ENCODE measurements at regions of chr9 and their contacts with region 1.

Region 1: GRCh38 chr9:36166101-36166927 is 2.9 kb upstream of the CCIN start:
- DNase-seq: peak; percentile 76
- H3K4me3 ChIP-seq: peak overlapping the region; percentile 69
- H3K27ac ChIP-seq: no peak overlapping the region
- H3K4me1 ChIP-seq: peaks cover 3% of the 10 kb centered on the region
- CTCF ChIP-seq: peak; percentile 93

Region 2: DNA sequence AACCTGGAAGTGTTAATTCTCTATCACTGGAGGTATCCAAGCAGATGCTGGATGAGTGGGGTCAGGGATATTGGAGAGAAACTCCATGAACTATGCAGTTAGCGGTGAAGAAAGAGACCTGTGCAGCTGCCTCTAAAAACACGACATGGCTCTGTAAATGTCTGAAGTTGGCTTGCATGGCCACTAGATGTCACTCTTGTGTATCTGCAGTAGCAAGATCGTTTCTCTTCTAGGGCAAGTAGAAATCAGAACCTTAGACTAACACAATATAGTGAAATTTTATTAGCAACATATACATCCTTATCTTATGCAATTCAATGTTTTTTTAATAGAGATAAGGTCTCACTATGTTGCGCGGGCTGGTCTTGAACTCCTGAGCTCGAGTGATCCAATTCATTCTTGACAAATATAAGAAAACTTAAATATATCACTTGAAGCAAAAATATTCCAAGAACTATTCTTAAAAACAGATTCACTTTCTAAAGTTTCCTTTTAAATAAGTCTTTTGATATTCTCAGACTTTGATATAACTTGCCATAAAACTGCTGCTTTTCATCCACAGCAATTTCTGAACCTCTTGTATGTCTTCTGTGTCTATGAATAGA is 211.3 kb before region 1 on chr9:
- CTCF ChIA-PET with region 1: no interaction called
- POLR2A ChIA-PET with region 1: no interaction called
- intact Hi-C with region 1: loop called (anchors 2 kb)
- DNase-seq: peak; percentile 78
- H3K4me3 ChIP-seq: no peak overlapping the region
- H3K27ac ChIP-seq: no peak overlapping the region
- H3K4me1 ChIP-seq: no peaks in the 10 kb centered on the region
- CTCF ChIP-seq: peak; percentile 96

Region 3: DNA sequence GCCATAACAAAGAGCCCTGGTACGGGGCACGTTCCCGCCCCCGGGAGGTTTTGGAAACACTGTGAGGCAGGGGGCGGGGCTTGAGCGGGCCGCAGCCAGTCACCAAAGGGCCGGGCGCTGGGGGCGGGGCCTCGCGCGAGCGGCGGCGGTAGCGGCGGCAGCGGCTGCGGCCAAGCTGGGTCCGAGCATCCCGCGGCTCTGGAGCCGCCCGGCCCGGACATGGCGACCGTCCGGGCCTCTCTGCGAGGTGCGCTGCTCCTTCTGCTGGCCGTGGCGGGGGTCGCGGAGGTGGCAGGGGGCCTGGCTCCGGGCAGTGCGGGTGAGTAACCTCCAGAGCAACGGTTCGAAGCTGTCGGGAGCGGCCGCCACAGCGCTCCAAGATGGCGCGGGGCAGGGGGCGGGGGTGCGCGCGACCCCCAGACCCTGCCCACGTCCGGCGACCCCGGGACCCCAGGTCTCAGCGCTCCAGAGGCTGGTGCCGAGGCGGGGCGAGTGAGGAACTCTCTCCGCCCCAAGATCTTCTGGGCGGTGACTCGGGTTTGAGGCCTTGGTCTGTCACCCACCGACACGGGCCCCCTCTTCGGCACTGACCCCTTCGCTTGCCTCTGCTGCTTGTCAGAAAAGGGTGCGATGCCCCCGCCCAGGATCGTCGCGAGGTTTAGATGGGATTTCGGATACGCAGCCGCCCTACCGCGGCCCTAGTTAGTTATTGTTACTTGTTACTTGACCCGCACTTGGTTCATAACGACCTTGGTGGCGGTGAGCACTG is 129.3 kb before region 1 on chr9 and contains the start of gene RECK:
- CTCF ChIA-PET with region 1: no interaction called
- POLR2A ChIA-PET with region 1: no interaction called
- intact Hi-C with region 1: loop called (anchors 10 kb)
- DNase-seq: peak; percentile 86
- H3K4me3 ChIP-seq: peak within 1 kb of the TSS; percentile 82
- H3K27ac ChIP-seq: no peak within 1 kb of the TSS
- H3K4me1 ChIP-seq: peaks cover 24% of the 10 kb centered on the region
- CTCF ChIP-seq: no peak
- total RNA-seq, gene RECK: 3.0 and 6.0 TPM in 2 replicates

Region 4: GRCh38 chr9:36102742-36103495 is 63.4 kb before region 1 on chr9:
- CTCF ChIA-PET with region 1: interaction called, 31 read pairs
- POLR2A ChIA-PET with region 1: interaction called, 6 read pairs
- intact Hi-C with region 1: loop called (anchors 1 kb)
- DNase-seq: peak; percentile 90
- H3K4me3 ChIP-seq: no peak overlapping the region
- H3K27ac ChIP-seq: no peak overlapping the region
- H3K4me1 ChIP-seq: peaks cover 4% of the 10 kb centered on the region
- CTCF ChIP-seq: peak; percentile 97

Region 5: GRCh38 chr9:36132086-36132485 is 34.2 kb before region 1 on chr9:
- CTCF ChIA-PET with region 1: no interaction called
- POLR2A ChIA-PET with region 1: no interaction called
- intact Hi-C with region 1: loop called (anchors 2 kb)
- DNase-seq: no peak
- H3K4me3 ChIP-seq: no peak overlapping the region
- H3K27ac ChIP-seq: no peak overlapping the region
- H3K4me1 ChIP-seq: peaks cover 4% of the 10 kb centered on the region
- CTCF ChIP-seq: no peak

Region 6: GRCh38 chr9:36151316-36152210 is 14.8 kb before region 1 on chr9:
- CTCF ChIA-PET with region 1: interaction called, 3 read pairs
- POLR2A ChIA-PET with region 1: interaction called, 13 read pairs
- intact Hi-C with region 1: loop called (anchors 1 kb)
- DNase-seq: peak; percentile 92
- H3K4me3 ChIP-seq: peak overlapping the region; percentile 64
- H3K27ac ChIP-seq: peak overlapping the region; percentile 74
- H3K4me1 ChIP-seq: peaks cover 46% of the 10 kb centered on the region
- CTCF ChIP-seq: no peak